ENCODE measurements at regions of chr6 and their contacts with region 1.

Region 1: GRCh38 chr6:110398778-110399177 is 16.6 kb downstream of the DDO start:
- DNase-seq: no peak
- H3K4me3 ChIP-seq: no peak overlapping the region
- H3K27ac ChIP-seq: no peak overlapping the region
- H3K4me1 ChIP-seq: no peaks in the 10 kb centered on the region
- H3K27me3 ChIP-seq: no peaks in the 10 kb centered on the region
- CTCF ChIP-seq: no peak
- POLR2A ChIP-seq: no peak

Region 2: DNA sequence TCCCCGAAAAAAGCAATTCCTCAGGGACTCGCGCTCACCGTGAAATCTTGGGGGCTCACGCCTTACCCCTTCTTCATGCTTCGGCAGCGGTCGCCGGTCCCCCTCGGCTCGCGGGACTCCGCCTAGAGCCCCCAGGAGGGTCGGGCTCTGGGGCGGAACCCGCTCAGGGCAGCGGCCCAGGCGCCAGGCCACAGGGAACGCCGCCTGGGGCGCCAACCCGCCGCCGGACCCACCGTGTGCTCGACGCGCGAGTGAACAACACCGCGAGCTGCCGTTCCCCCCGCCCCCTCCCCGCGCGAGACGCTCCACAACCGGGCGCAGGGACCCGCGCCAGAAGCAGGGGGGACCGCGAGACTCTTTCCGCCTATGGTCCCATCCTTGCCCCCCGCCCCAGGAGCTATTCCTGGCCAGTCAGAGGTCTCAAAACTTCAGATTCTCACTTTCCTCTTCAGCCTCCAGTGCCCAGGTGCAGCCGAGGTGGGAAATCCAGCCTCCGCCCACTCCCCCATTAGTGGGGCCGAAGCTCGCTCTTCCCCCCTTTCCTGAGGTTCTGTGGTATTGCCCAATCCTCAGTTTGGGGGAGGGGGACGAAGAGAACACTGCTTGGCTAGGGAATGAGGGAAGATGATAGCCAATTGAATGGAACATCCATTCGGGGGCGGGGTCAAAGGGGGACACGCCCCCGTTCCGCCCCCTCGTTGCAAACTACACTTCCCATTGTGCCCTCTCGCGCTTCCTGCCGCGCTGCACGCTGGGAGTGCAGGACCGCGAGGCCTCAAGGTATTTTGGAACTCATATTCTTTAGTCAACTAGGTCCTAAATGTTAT is 219.2 kb before region 1 on chr6 and contains the start of gene WASF1:
- intact Hi-C with region 1: loop called (anchors 10 kb)
- DNase-seq: peak; percentile 94 to 96
- H3K4me3 ChIP-seq: peak within 1 kb of the TSS; percentile 84 to 89
- H3K27ac ChIP-seq: peak within 1 kb of the TSS; percentile 92 to 95
- H3K4me1 ChIP-seq: peaks cover 11 to 15% of the 10 kb centered on the region in 2 donors
- H3K27me3 ChIP-seq: no peaks in the 10 kb centered on the region
- CTCF ChIP-seq: peak in 1 of 4 experiments; percentile 2
- POLR2A ChIP-seq: peak in 1 of 2 donors; percentile 47
- total RNA-seq, gene WASF1: 5.9 to 27.3 (median 17.2) TPM